AG04449 (cell line): ENCODE measurements at regions of chr22 and their contacts with region 1.

Region 1: DNA sequence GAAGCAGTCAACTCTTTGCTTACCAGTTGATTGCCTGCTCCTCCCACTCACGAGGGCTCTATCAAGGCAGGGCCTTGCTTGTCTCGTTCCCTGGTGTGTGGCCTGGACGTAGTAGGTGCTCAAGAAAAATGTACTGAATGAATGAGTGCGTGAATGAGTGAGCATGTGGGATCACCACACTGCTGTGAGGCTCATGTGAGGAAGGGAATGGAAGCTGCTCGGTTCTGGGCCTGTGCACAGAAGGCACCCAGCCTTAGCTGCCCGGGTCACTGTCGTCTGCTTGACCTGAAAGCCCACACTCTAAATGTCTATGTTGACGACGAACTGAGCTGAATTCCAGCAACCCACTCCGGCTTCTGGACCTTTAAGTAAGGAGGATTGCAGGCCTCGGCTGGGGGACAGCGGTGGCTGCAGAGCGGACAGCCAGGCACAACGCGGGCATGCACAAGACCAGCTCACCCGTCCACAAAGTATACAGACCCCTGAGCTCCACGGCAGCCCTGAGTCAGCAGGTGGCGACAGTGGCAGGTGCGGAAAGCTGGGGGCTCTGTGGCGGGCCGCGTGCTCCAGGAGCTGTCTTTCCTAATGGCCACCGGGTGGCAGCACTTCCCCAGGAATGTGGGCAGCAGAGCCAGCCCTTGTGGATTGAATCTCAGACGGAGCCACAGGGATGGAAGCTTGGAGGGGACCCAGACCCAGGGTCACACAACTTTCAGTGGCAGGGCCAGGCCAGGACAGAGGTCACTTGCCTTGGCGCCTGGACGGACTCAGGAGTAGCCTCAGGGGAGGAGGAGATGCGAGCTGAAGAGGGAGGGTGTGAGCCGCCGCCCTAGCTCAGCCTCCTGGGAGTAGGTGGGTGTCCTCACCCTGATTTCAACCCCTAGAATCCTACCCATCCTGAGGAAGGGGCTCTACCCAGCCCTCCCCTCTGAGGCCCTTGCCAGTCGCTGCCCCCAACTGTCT is 5.0 kb upstream of the PICK1 start:
- DNase-seq: no peak
- H3K4me3 ChIP-seq: no peak overlapping the region
- CTCF ChIP-seq: peak; percentile 79

Region 2: GRCh38 chr22:37994049-37994448 is 58.1 kb before region 1 on chr22:
- CTCF ChIA-PET with region 1: interaction called, 10 read pairs
- POLR2A ChIA-PET with region 1: no interaction called
- DNase-seq: no peak
- H3K4me3 ChIP-seq: no peak overlapping the region
- CTCF ChIP-seq: no peak

Region 3: DNA sequence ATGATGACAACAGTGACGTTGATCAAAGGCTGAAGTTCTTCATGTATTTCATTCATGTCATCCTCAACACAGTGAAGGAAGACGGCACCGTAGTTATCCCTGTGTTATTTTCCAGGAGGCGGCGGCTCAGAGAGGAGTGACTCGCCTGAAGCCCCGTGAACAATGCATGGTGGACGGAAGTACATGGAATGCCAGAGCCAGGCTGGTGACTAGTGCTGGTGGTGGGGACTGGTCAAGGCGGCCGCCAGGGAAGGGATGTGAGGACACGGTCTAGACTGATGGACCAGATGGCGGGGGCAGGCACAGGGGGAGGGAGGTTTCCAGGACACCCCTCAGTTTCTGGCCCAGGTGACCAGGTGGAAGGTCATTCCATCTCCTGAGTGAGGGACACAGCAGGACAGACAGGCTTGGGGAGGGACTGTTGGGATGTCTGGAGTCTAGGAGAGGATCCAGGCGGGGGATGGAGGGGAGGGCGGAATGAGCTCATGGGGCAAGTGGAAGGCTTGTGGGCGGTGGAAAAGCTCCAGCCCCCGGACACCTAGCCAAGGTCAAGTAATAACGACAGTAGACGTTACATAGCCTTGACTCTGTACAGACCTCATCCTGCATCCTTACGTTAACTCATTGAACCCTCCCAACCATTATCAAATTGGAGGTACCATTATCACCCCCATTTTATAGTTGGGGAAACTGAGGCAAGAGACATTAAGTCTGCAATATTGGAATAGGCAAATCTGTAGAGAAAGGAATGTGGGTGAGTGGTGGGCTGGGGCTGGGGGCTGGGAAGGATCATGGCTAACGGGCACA is 11.0 kb before region 1 on chr22:
- CTCF ChIA-PET with region 1: interaction called, 39 read pairs
- POLR2A ChIA-PET with region 1: no interaction called
- DNase-seq: no peak
- H3K4me3 ChIP-seq: no peak overlapping the region
- CTCF ChIP-seq: no peak

Region 4: DNA sequence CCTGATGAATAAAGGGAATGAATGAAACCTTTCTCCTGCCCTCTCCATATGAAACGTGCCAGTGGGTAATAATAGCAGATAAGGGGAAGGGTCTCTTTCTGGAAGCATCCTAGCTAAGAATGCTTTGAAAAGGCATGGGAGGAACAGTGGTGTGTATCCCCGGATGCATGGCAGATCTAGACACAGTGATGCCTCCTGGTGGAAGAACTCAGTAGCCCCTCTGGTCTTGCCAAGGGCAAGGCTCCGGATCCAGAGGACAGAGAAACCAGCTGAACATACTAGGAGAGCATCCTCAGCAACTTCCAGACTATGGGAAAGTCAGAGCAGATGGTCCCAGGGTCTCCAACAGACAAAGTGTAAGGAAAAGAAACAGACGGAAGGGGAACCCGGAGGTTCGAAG is 51.9 kb after region 1 on chr22:
- CTCF ChIA-PET with region 1: interaction called, 10 read pairs
- POLR2A ChIA-PET with region 1: no interaction called
- DNase-seq: no peak
- H3K4me3 ChIP-seq: no peak overlapping the region
- CTCF ChIP-seq: peak; percentile 35

Region 5: DNA sequence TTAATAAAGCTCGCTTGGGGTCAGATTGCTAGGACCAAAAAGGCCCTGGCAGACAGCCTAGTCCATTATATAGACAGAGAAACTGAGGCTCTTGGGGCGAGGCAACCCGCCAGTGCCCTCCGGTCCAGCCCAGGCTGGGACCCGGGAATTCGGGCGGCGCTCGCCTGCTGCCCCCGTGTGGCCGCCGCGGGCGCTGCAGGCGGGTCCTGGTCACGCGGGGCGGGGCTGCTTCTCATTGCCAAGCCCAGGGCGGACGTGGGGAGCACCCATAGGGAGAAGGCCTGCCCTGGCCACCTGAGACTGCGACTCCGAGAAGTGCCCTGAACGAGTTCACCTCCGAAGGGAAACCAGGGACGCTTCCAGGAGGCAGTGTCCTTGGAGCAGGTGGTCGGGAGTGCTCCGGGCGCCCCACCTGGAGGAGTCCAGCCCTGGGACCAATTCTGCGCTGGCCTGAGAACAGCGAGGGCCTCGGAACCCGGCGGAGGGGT is 301.0 kb after region 1 on chr22:
- CTCF ChIA-PET with region 1: interaction called, 20 read pairs
- POLR2A ChIA-PET with region 1: no interaction called
- DNase-seq: no peak
- H3K4me3 ChIP-seq: no peak overlapping the region
- CTCF ChIP-seq: peak; percentile 87

Region 6: GRCh38 chr22:38569972-38570778 is 518.0 kb after region 1 on chr22 and contains the start of gene DMC1:
- CTCF ChIA-PET with region 1: interaction called, 79 read pairs
- POLR2A ChIA-PET with region 1: no interaction called
- DNase-seq: no peak
- H3K4me3 ChIP-seq: peak within 1 kb of the TSS; percentile 75
- CTCF ChIP-seq: no peak